SK-MEL-5 (cell line): ENCODE measurements at regions of chr15 and their contacts with region 1.

Region 1: DNA sequence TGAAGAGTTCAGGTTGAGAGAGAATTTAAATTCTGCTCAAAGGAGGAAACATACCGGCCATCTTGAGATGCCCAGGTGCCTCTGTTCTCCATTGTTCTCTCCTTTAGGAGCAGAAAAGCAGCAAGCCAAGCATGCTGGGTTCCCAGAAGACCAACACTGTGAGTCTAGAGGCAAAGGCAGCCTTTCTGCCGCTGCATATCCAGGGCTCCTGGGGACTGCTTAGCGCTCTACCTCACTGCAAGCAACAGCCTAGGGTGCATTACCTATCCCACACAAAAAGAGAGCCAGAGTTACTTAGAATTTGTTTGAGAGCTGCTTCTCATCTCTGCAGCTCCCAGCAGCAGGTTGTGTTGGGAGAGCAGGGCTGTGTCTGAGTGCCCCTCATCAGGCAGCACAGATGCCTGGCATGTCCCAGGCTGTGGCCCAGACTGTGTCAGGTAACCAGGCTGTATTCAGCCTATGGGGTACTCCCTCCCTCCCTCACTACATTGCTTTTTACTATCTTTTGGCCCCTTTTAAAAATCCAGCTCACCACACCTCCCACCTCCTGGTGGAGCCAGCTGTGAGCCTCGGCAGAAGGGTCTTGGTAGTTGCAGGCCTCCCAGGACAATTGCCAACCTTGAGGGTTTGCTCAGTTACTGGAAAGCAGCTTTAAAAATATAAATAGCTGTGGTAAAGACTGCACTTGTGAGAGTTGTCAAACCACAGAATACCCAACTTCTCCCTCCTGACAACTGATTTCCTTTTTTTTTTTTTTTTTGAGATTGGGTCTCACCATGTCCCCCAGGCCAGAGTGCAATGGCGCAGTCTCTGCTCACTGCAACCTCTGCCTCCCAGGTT is 30.2 kb downstream of the BCL2L10 start:
- DNase-seq: no peak

Region 2: GRCh38 chr15:51982013-51982769 is 100.2 kb before region 1 on chr15:
- in situ Hi-C with region 1: loop called (anchors 10 kb)
- DNase-seq: peak; percentile 92

Region 3: GRCh38 chr15:52208306-52208946 is 126.0 kb after region 1 on chr15:
- in situ Hi-C with region 1: no loop called
- DNase-seq: peak; percentile 91